AG04449 (cell line): ENCODE measurements at regions of chr17 and their contacts with region 1.

Region 1: GRCh38 chr17:50297407-50297865 is 23.2 kb downstream of the TMEM92 start:
- DNase-seq: no peak
- H3K4me3 ChIP-seq: no peak overlapping the region
- CTCF ChIP-seq: peak; percentile 96

Region 2: DNA sequence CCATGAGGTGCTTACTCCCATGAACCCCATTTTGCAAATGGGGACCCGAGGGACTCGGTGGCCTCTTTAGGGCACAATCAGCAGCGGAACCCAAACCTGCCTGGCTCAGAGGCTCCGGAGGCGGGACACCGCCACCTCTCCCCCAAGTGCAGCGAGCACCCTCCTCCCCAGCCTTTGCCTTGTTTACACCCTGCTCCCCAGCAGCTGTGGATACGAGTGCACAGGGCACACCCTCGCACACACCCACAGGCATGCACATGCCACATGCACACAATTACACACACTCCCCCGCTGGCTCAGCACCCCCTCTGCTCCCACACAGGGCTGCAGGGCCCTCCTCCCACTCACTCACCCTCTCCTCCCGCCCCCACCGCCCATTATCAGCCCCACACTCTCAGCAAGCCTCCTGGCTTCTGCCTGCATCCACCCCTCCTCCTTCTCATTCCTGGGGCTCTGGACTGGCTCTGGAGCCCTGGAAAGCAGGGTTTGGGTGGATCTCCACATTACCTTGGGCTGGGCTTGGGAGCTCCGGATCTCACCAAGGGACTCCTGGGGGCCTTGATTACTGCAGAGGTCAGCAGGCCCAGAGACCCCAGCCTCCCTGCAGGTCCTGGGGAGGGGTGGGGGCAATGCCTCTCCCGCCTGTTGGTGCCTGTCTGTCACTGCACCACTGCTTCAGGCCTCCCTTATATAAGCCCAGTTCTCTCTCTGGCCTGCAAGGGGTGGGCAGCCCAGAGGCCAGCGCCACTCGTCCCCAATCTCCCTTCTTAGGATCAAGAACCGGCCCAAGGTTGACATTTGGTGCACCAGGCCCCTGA is 195.9 kb before region 1 on chr17:
- CTCF ChIA-PET with region 1: interaction called, 25 read pairs
- POLR2A ChIA-PET with region 1: no interaction called
- DNase-seq: no peak
- H3K4me3 ChIP-seq: no peak overlapping the region
- CTCF ChIP-seq: no peak

Region 3: DNA sequence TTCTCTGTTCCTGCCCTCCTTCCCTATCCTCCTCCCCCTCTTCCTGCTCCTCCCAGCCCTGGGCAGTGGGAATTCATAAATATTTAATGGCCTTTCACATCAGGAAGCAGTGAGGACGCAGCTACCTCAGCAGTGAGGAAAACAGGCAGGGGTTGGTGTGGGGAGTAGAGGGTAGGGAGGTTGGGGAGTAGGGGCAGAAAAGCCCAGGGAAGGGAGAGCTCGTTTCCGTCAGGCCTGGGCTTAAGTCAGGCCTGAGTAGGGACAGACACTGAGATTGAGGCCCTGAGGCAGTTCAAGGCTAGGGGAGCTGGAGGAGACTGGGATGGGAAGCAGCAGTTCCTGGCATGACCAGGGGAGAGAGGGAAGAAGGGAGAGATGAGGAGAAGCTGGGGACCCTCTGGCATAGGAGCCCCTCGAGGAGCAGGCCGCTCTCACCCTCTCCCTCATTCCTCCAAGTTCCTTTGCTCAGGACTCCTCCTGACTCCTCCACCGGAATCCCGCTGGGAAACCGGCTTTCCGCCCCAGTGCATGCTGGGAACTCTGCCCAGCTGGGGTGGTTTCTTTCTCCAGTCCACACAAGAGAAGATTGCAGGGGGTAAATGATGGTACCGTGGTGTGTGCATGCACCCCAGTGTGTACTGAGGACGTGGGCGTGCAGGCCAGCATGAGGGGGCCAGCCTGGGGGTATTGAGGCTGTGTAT is 173.6 kb before region 1 on chr17:
- CTCF ChIA-PET with region 1: interaction called, 43 read pairs
- POLR2A ChIA-PET with region 1: no interaction called
- DNase-seq: no peak
- H3K4me3 ChIP-seq: no peak overlapping the region
- CTCF ChIP-seq: no peak

Region 4: GRCh38 chr17:50151041-50151936 is 146.1 kb before region 1 on chr17:
- CTCF ChIA-PET with region 1: interaction called, 77 read pairs
- POLR2A ChIA-PET with region 1: interaction called, 3 read pairs
- DNase-seq: no peak
- H3K4me3 ChIP-seq: peak overlapping the region; percentile 77
- CTCF ChIP-seq: peak; percentile 81

Region 5: GRCh38 chr17:50169121-50169764 is 128.2 kb before region 1 on chr17:
- CTCF ChIA-PET with region 1: interaction called, 455 read pairs
- POLR2A ChIA-PET with region 1: interaction called, 8 read pairs
- DNase-seq: no peak
- H3K4me3 ChIP-seq: no peak overlapping the region
- CTCF ChIP-seq: peak; percentile 84

Region 6: DNA sequence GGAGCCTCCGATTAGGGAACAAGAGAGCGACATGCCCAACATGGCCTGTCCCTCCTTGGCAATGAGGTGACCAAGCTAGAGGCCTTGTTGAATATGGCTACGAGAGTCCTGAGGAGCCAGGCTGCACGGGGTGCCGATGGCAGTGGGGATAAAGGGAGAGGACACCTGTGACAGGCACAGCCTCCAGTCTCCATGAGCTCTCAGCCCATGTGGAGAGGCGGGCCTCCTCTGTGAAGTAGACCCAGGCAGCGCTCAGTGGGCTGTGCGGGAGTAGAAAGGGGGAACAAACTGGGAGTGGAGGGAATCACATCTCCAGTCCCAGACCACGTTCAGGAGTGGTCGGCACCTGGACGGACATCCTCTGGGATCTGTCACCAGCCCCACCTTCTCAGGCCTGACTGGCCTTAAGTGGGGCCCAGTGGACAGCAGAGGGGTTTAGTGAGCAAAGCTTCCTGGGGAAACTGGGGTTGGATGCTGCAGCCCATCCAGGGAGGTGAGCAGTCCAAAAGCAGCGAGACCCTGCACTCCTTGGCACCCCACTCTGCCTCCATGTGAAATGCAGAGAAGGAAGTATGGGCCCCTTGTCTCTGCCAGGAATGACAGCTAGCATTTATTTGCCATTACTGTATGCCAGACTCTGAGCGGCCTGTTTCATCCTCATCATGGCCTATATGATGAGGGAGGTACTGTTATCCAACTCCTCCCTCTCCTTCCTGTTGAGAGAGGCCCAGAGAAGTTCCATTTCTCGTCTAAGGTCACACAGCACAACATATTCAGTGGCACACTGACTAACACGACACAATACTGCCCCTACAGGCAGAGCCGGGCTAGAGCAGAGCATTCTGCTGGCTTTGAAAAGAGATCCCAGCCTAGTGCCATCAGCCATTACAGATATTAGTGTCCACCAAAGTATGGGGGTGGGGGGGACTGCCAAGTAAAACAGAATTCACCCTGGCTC is 27.7 kb before region 1 on chr17:
- CTCF ChIA-PET with region 1: interaction called, 200 read pairs
- POLR2A ChIA-PET with region 1: no interaction called
- DNase-seq: no peak
- H3K4me3 ChIP-seq: peak overlapping the region; percentile 53
- CTCF ChIP-seq: peak; percentile 80